AG04449 (cell line): ENCODE measurements at regions of chr22 and their contacts with region 1.

Region 1: DNA sequence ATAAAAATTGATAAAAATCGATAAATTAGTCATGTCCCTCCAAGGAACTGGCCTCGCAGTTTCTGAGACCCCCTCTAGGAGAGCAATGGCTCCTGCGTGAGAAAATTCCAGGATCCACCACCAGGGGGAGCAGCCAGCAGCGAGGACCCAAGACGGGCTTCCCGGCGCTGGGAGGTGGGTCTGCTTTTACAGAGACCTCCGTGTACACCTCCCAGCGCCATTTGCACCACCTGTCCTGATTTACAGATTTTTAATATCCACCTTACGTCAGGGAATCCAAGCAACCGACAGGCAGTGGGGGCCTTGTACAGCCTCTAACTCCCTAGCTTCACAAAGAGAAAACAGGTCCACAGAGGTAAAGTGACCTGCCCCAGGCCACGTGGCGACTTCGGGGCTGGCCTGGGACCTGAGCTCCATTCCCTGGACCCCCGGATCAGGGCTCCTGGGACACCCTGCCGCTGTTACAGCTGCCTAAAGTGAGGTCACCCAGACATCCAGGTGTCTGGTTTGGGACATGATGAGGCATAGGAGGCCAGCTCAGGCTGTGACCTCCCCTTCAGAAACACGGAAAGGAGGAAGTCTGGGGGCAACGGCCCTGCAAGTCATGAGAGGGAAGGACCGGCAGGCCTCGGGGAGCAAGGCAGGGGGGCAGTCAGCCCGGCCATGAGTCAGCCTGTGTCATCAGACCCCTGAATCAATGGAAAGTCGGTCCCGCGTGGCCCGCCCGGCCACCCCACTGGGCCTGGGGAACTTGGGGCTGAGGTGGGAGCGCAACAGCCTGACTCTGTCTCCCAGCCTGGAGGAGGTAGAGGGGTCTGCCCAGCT is 3.5 kb downstream of the OSM start:
- DNase-seq: no peak
- H3K4me3 ChIP-seq: peak overlapping the region; percentile 12
- CTCF ChIP-seq: peak; percentile 93

Region 2: DNA sequence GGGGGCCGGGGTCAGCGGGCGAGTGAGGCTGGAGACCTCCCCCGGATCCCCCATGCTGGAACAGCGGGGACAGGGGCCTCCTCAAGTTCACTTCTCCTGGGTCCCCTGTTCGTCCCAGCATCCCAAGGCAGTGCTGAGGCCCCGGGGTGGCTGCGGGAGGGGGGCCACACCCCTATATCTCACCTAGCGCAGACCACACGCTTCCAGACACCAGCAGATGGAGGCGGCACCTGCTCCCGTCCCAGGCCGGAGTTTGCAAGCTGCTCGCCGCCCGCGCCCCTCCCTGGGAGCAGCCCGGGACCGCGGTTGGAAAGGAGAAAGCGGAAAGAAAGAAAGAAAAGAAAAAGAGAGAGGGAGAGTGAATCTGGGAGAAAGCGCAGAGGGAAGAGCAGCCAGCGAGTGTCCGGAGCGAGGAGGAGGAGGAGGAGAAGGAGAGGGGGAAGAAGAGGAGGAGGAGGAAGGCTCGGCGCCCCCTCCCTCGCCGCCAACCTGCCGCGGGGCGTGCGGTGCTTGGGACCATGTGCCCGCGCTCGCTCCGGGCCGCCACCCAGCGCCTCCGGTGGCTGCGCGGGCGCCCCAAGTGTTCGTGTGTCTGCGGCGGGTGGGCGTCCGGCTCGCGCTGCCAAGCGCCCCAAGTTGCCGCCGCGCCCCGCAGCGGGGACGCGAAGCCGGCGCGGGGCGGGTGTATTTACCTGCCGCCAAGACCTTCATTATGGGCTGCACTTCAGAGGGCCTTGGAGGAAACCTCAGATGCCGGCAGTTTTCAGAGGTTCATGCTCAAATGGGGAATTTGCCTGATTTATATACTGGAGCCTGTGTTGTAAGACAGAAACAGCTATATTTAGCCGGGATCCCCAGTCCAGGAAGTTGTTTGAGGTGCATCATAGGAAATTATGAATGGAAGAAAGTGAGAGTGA is 16.9 kb before region 1 on chr22 and contains the start of gene LIF:
- CTCF ChIA-PET with region 1: interaction called, 20 read pairs
- POLR2A ChIA-PET with region 1: no interaction called
- DNase-seq: no peak
- H3K4me3 ChIP-seq: peak within 1 kb of the TSS; percentile 75
- CTCF ChIP-seq: peak; percentile 30

Region 3: GRCh38 chr22:30277547-30278344 is 14.6 kb after region 1 on chr22:
- CTCF ChIA-PET with region 1: interaction called, 33 read pairs
- POLR2A ChIA-PET with region 1: no interaction called
- DNase-seq: no peak
- H3K4me3 ChIP-seq: 0 out of 2 replicates have a peak overlapping the region, but pooled peaks have one; percentile 3
- CTCF ChIP-seq: no peak

Region 4: DNA sequence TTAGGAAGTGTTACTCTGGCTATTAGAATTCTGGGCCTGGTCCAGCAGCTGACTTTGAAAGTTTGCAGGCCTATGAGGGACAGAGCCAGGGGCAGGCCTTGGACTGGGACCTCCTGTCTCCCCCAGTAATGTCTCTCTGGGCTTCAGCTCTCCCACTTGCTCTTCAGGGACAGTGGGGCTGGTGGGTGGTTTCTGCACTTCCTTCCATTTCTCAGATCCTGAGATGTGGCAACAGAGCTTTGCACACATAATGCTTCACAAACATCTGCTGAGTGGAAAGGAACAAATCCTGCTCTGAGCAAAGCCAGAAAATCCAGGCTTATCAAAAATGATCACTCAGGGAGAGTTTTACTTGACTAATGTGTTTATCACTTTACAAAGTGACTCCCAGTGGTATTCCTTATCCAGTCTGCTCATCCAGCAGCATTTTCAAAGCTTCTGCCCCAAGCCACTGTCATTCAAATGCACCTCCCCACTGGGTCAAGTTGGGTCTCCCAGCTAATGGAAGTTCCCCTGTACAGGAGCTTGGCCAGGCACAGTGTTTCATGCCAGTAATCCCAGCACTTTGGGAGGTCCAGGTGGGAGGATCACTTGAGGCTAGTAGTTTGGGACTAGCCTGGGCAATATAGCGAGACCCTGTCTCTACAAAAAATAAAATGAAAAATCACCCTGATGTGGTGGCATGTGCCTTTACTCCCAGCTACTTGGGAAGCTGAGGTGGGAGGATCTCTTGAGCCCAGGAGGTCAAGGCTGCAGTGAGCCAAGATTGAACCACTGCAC is 418.1 kb after region 1 on chr22:
- CTCF ChIA-PET with region 1: no interaction called
- POLR2A ChIA-PET with region 1: no interaction called
- DNase-seq: no peak
- H3K4me3 ChIP-seq: no peak overlapping the region
- CTCF ChIP-seq: no peak